Transverse colon (tissue), 4 donors: ENCODE measurements at regions of chr5 and their contacts with region 1.

Region 1: DNA sequence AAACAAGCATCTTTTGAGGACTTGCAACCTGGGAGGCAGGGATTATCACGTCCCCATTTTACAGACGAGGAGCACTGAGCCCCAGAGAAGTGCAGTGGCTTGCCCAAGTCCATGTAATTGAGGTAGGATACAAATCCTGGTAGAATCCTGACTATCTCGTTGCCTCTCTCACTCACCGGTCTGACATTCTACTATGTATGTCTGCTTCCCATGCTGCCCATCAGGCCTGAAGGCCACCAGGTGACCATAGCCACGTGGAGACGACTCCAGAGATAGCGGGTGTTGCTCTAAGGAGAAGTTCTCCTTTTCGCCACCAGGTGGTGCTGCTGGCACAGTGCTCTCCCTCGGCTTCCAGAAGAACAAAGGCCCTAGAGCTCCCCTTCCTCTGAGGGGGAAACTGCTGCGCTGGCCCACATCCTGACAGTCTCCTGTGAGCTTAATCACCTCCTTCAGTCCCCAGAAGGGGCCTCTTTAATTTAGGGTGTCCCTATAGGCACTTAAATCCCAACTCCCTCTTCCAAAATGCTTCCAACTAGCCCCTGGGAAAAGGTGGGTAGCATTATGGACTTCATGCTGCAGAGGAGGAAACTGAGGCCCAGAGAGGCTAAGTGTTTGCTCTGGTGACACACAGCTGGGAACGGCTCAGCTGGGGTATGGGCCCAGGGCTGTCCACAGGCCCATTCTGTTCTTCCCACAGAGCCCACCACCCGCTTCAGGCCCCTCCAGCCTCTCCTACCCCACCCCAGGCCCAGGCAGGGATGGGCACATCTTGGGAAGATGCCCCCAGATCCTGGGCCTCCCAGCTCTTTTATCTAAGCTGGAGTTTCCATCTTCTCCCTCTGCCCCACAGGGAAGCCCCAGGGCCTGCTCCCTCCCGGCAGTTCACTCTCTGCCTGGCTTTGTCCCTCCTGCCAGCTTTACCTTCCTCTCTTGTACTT is 6.4 kb downstream of the SLC34A1 start:
- DNase-seq: peak; percentile 91
- H3K4me3 ChIP-seq: no peak overlapping the region
- H3K27ac ChIP-seq: peak overlapping the region in 2 of 4 donors; percentile 8 to 42
- H3K4me1 ChIP-seq: peaks cover 0 to 14% (median 6%) of the 10 kb centered on the region in 4 donors
- H3K27me3 ChIP-seq: no peaks in the 10 kb centered on the region
- CTCF ChIP-seq: peak; percentile 97 to 99 (median 98)
- EP300 ChIP-seq: no peak
- POLR2A ChIP-seq: no peak

Region 2: DNA sequence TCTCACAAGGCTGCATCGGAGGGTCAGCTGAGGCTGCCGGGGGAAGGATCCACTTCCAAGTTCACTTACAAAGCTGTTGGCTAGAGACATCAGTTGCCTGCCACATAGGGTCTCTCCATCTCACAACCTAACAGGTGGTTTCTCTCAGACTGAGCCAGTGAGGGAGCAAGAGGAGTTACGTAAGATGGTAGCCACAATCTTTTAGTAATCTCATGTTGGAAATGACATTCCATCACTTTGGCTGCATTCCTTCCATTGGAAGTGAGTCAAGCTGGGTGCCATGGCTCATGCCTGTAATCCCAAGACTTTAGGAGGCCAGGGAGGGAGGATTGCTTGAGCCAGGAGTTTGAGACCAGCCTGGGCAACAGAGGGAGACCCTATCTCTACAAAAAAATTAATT is 28.4 kb after region 1 on chr5:
- in situ Hi-C with region 1: no loop called
- intact Hi-C with region 1: no loop called
- DNase-seq: no peak
- H3K4me3 ChIP-seq: no peak overlapping the region
- H3K27ac ChIP-seq: no peak overlapping the region
- H3K4me1 ChIP-seq: peaks cover 0 to 11% (median 0%) of the 10 kb centered on the region in 4 donors
- H3K27me3 ChIP-seq: no peaks in the 10 kb centered on the region
- CTCF ChIP-seq: no peak
- EP300 ChIP-seq: no peak
- POLR2A ChIP-seq: no peak

Region 3: DNA sequence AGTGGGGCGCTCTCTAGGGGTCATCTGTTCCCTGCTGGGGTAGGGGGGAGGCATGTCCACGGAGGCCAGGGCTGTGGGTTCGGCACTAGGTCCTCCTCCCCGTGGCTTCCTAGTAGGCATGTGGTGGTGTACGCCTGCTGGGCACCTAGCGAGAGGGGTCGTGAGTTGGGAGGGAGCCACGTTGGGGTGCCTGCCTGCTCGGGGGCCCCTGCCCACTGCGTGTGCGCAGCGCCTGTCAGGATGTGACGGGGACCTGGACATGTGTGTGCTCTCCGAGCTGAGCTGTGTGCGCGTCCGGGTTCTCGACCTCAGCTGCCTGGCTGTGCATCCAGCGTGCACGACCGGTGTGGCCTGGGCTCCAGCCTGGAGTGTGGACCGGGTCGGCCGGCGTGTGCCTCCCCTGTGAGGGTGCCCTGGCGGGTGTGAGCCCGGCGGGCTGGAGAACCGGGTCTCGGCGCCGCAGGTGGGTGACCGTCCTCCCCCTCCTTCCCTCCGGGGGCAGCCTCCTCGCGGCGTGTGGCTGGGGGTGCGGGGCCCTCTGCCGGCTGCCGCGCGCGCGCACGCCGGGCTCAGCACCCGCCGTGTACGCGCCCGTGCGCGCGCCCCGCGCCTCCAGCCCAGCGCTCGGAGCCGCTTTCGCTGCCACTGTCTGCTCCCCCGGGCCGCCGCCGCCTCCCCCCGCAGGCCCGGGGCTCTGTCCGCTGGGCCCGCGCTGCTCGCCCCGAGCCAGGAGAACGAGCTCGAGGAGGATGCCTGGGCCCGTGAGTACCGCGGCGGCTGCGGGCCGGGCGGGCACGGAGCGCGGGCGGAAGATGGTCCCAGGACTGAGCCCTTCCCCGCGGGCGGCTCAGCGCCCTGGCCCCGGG is 55.8 kb after region 1 on chr5 and contains the start of gene PRR7:
- in situ Hi-C with region 1: loop called in 2 of 4 experiments (anchors 5 to 10 kb)
- intact Hi-C with region 1: loop called (anchors 5 kb)
- DNase-seq: peak; percentile 67
- H3K4me3 ChIP-seq: peak within 1 kb of the TSS; percentile 35 to 56 (median 48)
- H3K27ac ChIP-seq: peak within 1 kb of the TSS in 3 of 4 donors; percentile 51 to 56 (median 53)
- H3K4me1 ChIP-seq: peaks cover 18 to 22% (median 20%) of the 10 kb centered on the region in 4 donors
- H3K27me3 ChIP-seq: peaks cover 23% of the 10 kb centered on the region
- CTCF ChIP-seq: no peak
- EP300 ChIP-seq: no peak
- POLR2A ChIP-seq: peak; percentile 40
- total RNA-seq, gene PRR7: 2.1 to 5.0 (median 2.5) TPM in 3 of 4 donors, not detected in the other

Region 4: DNA sequence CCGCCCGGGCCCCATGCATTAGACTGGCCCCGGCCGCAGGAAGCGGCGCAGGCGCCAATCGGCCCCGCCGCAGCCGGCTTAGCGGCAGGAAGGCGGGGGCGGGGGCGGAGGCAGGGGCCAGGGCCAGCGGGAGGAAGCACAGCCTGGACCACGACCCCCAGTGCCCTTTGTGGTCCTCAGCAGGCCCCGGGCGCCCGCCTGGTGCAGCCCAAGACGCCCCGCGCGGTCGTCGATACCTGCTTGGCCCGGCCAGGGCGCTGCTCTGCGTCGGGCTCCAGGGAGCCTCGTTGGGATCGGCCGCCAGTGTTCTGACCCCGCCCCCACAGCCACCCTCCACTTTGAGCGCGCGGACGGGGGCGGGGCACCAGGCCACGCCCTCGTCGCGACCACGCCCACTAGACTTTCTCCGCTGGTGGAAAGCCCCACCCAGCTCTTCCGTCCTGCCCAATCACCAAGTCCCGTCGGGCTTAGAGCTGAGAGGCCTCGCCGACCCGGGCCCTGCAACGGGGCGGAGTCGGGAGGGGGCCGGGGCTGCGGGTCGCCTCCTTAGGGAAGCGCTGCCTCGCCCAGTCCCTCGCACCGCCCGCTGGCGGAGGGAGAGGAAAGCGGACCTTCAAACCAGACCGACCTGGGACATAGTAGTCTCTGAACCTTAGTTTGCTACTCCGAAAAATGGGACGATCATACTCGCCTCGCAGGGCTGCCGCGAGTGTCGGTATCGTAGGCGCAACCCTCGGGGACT is 106.8 kb after region 1 on chr5 and contains the start of gene PDLIM7:
- in situ Hi-C with region 1: loop called in 2 of 4 experiments (anchors 10 to 25 kb)
- intact Hi-C with region 1: loop called (anchors 2 kb)
- DNase-seq: peak; percentile 97
- H3K4me3 ChIP-seq: peak within 1 kb of the TSS; percentile 54 to 80 (median 65)
- H3K27ac ChIP-seq: peak within 1 kb of the TSS; percentile 91 to 96 (median 94)
- H3K4me1 ChIP-seq: peaks cover 20 to 64% (median 45%) of the 10 kb centered on the region in 4 donors
- H3K27me3 ChIP-seq: peaks cover 10% of the 10 kb centered on the region
- CTCF ChIP-seq: peak in 2 of 5 experiments; percentile 7 to 10
- EP300 ChIP-seq: no peak
- POLR2A ChIP-seq: peak; percentile 90
- total RNA-seq, gene PDLIM7: 52.6 to 256 (median 78.6) TPM

Region 5: GRCh38 chr5:177516604-177517568 is 126.3 kb after region 1 on chr5 and contains the start of gene DDX41:
- in situ Hi-C with region 1: loop called in 1 of 4 experiments (anchors 25 kb)
- intact Hi-C with region 1: no loop called
- DNase-seq: peak; percentile 98
- H3K4me3 ChIP-seq: peak within 1 kb of the TSS; percentile 81 to 97 (median 86)
- H3K27ac ChIP-seq: peak within 1 kb of the TSS; percentile 85 to 93 (median 91)
- H3K4me1 ChIP-seq: peaks cover 11 to 20% (median 18%) of the 10 kb centered on the region in 4 donors
- H3K27me3 ChIP-seq: no peaks in the 10 kb centered on the region
- CTCF ChIP-seq: no peak
- EP300 ChIP-seq: no peak
- POLR2A ChIP-seq: peak; percentile 62
- total RNA-seq, gene DDX41: 96.5 to 170 (median 130) TPM